ENCODE measurements at regions of chr19 and their contacts with region 1.

Region 1: GRCh38 chr19:40139533-40140287 is 49.0 kb upstream of the ZNF780A start:
- DNase-seq: no peak
- H3K4me3 Mint-ChIP-seq: no peak overlapping the region
- H3K27ac Mint-ChIP-seq: no peak overlapping the region
- H3K4me1 Mint-ChIP-seq: peaks cover 17% of the 10 kb centered on the region
- H3K27me3 Mint-ChIP-seq: peaks cover 5% of the 10 kb centered on the region

Region 2: GRCh38 chr19:39846176-39846677 is 293.5 kb before region 1 on chr19 and contains the start of gene FBL:
- CTCF ChIA-PET with region 1: no interaction called
- intact Hi-C with region 1: no loop called
- DNase-seq: peak; percentile 98
- H3K4me3 Mint-ChIP-seq: peak within 1 kb of the TSS; percentile 91
- H3K27ac Mint-ChIP-seq: peak within 1 kb of the TSS; percentile 88
- H3K4me1 Mint-ChIP-seq: peaks cover 38% of the 10 kb centered on the region
- H3K27me3 Mint-ChIP-seq: no peaks in the 10 kb centered on the region
- total RNA-seq, gene FBL: 742 to 785 TPM

Region 3: DNA sequence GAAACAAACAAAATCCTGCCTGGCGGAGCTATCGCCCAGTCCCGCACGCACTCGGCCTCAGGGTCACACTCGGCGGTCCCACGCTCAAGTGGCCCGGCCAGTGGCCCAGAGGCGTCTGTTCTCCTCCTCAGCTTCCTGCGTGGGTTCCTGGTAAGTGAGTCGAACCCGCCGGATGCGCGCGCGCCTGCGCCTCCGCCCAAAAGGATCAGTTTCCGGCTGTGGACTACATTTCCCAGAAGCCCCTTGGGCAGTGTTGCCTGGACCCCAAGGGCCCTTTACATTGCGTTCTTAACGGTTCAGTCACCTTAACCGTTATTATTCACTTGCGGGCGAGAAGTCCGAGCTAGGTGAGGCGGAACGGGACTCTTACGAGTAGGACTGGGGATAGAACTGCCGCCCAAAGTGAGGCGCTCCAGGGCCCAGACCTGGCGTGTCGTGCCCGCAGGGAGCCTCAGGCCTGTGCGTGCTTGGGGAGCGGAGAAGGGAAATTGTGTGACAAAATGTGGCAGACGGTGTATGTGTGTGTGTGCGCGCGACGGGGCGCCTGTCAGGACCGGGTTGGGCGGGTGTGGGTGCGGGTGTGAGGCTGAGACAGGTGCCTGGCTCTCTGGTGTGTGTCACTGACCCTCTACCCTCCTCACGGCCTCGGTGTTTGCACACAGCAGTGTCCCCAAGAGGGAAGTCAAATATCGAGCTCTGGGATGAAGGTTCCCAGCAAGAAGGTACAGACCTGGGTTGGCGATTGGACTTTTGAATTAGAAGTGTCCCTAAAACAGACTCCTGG is 142.7 kb before region 1 on chr19 and contains the start of gene ZNF546:
- CTCF ChIA-PET with region 1: no interaction called
- intact Hi-C with region 1: loop called (anchors 5 kb)
- DNase-seq: peak; percentile 94
- H3K4me3 Mint-ChIP-seq: peak within 1 kb of the TSS; percentile 93
- H3K27ac Mint-ChIP-seq: peak within 1 kb of the TSS; percentile 94
- H3K4me1 Mint-ChIP-seq: peaks cover 41% of the 10 kb centered on the region
- H3K27me3 Mint-ChIP-seq: no peaks in the 10 kb centered on the region
- total RNA-seq, gene ZNF546: 1.6 to 2.3 TPM

Region 4: GRCh38 chr19:40190891-40191835 is 51.5 kb after region 1 on chr19 and contains the start of gene MAP3K10:
- CTCF ChIA-PET with region 1: interaction called, 7 read pairs
- intact Hi-C with region 1: loop called (anchors 1 kb)
- DNase-seq: peak; percentile 79
- H3K4me3 Mint-ChIP-seq: peak within 1 kb of the TSS; percentile 85
- H3K27ac Mint-ChIP-seq: peak within 1 kb of the TSS; percentile 91
- H3K4me1 Mint-ChIP-seq: peaks cover 30% of the 10 kb centered on the region
- H3K27me3 Mint-ChIP-seq: no peaks in the 10 kb centered on the region
- total RNA-seq, gene MAP3K10: 8.4 to 9.3 TPM

Region 5: GRCh38 chr19:40252395-40252794 is 112.7 kb after region 1 on chr19:
- CTCF ChIA-PET with region 1: interaction called, 10 read pairs
- intact Hi-C with region 1: no loop called
- DNase-seq: no peak
- H3K4me3 Mint-ChIP-seq: no peak overlapping the region
- H3K27ac Mint-ChIP-seq: no peak overlapping the region
- H3K4me1 Mint-ChIP-seq: peaks cover 5% of the 10 kb centered on the region
- H3K27me3 Mint-ChIP-seq: no peaks in the 10 kb centered on the region

Region 6: DNA sequence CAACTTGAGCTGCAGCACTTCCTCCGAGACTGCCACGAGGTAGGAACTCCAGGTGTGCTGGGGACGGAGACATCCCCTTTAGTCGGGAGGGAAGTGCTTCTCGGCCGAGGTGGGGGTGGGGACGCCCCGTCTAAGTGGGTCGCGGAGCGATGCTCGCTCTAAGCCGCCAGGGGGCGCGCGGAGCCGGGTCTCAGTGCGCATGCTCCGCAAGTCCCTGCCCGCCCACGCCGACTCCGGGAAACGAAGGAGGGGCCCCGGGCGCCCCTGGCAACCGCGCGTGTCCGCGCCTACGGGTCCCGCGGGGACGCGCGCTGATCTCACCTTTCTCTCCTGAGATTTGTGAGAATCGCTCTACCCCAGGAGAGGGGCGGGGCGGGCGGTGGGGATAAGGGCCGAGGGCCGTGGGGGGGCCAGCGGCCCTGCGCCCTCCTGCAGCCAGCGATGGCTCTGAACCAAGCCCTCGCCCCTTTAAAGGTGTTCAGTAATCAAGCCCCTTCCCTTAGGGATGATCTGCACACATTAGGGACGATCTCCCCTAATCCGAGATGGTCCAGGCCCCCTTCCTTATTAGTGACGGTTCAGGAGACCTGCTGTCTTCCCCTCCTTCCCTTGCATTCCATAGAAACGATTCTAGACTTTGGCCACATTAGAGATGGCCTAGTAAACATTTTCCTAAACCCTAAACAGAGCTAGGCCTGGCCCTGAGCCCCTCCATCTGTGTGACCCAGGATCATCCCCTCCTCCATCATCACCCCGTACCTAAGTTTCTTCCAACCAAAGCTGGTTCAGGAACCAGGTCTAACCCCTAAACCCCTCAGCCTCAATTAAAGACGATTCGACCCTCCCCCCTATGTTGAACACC is 389.6 kb after region 1 on chr19:
- CTCF ChIA-PET with region 1: no interaction called
- intact Hi-C with region 1: loop called (anchors 10 kb)
- DNase-seq: peak; percentile 92
- H3K4me3 Mint-ChIP-seq: peak overlapping the region; percentile 43
- H3K27ac Mint-ChIP-seq: no peak overlapping the region
- H3K4me1 Mint-ChIP-seq: peaks cover 10% of the 10 kb centered on the region
- H3K27me3 Mint-ChIP-seq: peaks cover 13% of the 10 kb centered on the region

Measured in activated naive CD4-positive, alpha-beta T cell treated with anti-CD3 and anti-CD28 coated beads for 36 hours (primary cell).